K562 (cell line): ENCODE measurements at regions of chr14 and their contacts with region 1.

Region 1: DNA sequence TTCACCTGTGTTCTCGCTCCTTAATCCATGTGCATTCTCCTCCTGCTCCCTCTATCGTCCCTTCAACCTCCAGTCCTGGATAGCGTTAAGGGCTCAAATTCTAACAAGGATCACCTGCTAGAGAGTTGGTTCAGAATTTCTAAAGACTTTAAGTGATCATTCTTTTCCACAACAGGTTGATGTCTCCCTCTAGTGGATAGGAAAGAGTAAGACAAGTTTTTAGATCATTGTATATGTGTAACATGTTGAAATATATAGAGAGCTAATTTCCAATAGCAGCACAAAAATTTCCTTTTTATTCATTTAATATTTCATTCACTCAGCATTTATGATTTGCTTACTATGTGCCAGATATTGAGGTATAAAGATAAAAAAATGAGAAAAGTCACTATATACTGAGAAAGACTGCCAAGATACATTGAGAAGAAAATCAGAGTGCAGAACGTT is 9.3 kb upstream of the ESR2 start:
- DNase-seq: peak; percentile 41 to 48 (median 44)
- ATAC-seq: peak; percentile 89
- H3K4me3 ChIP-seq: no peak overlapping the region
- H3K27ac ChIP-seq: no peak overlapping the region
- H3K4me1 ChIP-seq: no peaks in the 10 kb centered on the region
- H3K27me3 ChIP-seq: peaks cover 0 to 4% of the 10 kb centered on the region in 2 experiments; a peak in 1 of 5 replicates
- CTCF ChIP-seq: peak; percentile 37 to 80 (median 44); a peak in 3 of 6 replicates
- EP300 ChIP-seq: no peak
- POLR2A ChIP-seq: no peak
- RAD21 ChIP-seq: peak; percentile 76 to 88

Region 2: GRCh38 chr14:63388763-63389431 is 914.6 kb before region 1 on chr14:
- CTCF ChIA-PET with region 1: interaction called, 6 read pairs
- POLR2A ChIA-PET with region 1: no interaction called
- in situ Hi-C with region 1: loop called (anchors 25 kb)
- intact Hi-C with region 1: loop called (anchors 5 kb)
- DNase-seq: peak; percentile 23 to 55 (median 36)
- ATAC-seq: peak; percentile 94
- H3K4me3 ChIP-seq: no peak overlapping the region
- H3K27ac ChIP-seq: no peak overlapping the region
- H3K4me1 ChIP-seq: no peaks in the 10 kb centered on the region
- H3K27me3 ChIP-seq: no peaks in the 10 kb centered on the region
- CTCF ChIP-seq: peak; percentile 63 to 79 (median 74)
- EP300 ChIP-seq: no peak
- POLR2A ChIP-seq: no peak
- RAD21 ChIP-seq: peak; percentile 57 to 77

Region 3: DNA sequence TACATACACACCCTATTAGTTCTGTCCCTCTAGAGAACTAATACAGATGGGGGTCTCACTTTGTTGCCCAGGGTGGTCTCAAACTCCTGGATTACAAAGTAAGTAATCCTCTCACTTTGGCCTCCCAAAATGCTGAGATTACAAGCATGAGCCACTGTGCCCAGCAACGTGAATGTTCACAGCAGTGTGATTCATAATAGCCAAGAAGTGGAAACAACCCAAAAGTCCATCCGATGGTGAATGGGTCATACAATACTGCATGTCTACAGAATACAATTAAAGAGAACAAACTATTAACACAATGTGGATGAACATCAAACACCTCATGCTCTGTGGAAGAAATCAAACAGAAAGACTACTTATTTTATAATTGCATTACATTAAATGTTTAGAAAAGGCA is 508.0 kb before region 1 on chr14:
- CTCF ChIA-PET with region 1: interaction called, 4 read pairs
- POLR2A ChIA-PET with region 1: no interaction called
- in situ Hi-C with region 1: loop called (anchors 10 kb)
- intact Hi-C with region 1: no loop called
- DNase-seq: no peak
- ATAC-seq: no peak
- H3K4me3 ChIP-seq: no peak overlapping the region
- H3K27ac ChIP-seq: no peak overlapping the region
- H3K4me1 ChIP-seq: no peaks in the 10 kb centered on the region
- H3K27me3 ChIP-seq: no peaks in the 10 kb centered on the region
- CTCF ChIP-seq: no peak
- EP300 ChIP-seq: no peak
- POLR2A ChIP-seq: no peak
- RAD21 ChIP-seq: no peak

Region 4: DNA sequence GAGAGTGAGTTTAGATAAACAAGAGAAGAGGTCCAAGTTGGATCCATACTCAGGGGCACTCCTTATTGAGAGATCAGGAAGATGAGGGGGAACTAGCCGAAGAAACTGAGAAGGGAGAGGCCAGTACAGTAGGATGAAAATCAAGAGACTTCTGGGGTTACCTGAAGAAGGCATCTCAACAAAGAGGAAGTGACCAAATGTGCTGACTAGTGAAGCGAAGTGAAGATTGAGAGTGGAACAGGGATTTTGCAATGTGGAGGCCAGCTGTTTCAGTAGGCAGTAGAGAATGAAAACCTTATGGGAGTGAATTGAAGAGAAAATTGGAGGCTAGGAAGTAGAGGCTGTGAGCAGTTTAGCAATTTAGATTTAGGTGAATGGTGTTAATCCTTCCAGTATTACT is 297.7 kb before region 1 on chr14:
- CTCF ChIA-PET with region 1: no interaction called
- POLR2A ChIA-PET with region 1: interaction called, 3 read pairs
- in situ Hi-C with region 1: loop called (anchors 25 kb)
- intact Hi-C with region 1: no loop called
- DNase-seq: no peak
- ATAC-seq: no peak
- H3K4me3 ChIP-seq: no peak overlapping the region
- H3K27ac ChIP-seq: no peak overlapping the region
- H3K4me1 ChIP-seq: no peaks in the 10 kb centered on the region
- H3K27me3 ChIP-seq: no peaks in the 10 kb centered on the region; a peak in 1 of 5 replicates
- CTCF ChIP-seq: no peak
- EP300 ChIP-seq: no peak
- POLR2A ChIP-seq: no peak
- RAD21 ChIP-seq: no peak

Region 5: DNA sequence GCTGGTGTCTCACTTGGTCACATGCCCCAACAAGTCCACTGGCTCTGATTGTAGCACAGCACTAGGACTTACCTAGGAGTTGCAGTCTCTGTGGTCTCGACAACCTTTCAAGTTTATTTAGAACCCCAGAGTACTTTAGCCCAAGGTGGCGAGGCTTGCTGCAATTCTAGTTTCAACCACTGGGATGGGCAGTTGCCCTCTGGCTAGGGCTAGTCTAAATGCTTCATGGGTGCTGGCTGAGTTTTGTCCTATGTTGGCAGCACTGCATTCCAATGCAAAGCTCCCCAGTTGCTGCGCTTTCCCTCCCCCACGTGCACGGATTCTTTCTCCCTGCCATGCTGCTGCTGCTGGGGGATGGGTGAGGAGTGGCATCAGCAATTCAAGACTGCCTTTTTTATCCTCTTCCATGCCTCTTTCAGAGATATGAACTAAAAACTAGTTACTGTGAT is 242.8 kb before region 1 on chr14:
- CTCF ChIA-PET with region 1: interaction called, 5 read pairs
- POLR2A ChIA-PET with region 1: no interaction called
- in situ Hi-C with region 1: no loop called
- intact Hi-C with region 1: loop called (anchors 5 kb)
- DNase-seq: peak; percentile 5 to 12 (median 6)
- ATAC-seq: peak; percentile 76
- H3K4me3 ChIP-seq: no peak overlapping the region
- H3K27ac ChIP-seq: no peak overlapping the region
- H3K4me1 ChIP-seq: no peaks in the 10 kb centered on the region
- H3K27me3 ChIP-seq: no peaks in the 10 kb centered on the region
- CTCF ChIP-seq: peak; percentile 35 to 46 (median 42); a peak in 5 of 6 replicates
- EP300 ChIP-seq: no peak
- POLR2A ChIP-seq: no peak
- RAD21 ChIP-seq: peak in 1 of 2 experiments; percentile 46; a peak in 2 of 4 replicates

Region 6: GRCh38 chr14:64137657-64138290 is 165.7 kb before region 1 on chr14:
- CTCF ChIA-PET with region 1: interaction called, 9 read pairs
- POLR2A ChIA-PET with region 1: no interaction called
- in situ Hi-C with region 1: no loop called
- intact Hi-C with region 1: loop called (anchors 2 kb)
- DNase-seq: peak in 2 of 4 experiments; percentile 17 to 43
- ATAC-seq: peak; percentile 80
- H3K4me3 ChIP-seq: no peak overlapping the region
- H3K27ac ChIP-seq: no peak overlapping the region
- H3K4me1 ChIP-seq: no peaks in the 10 kb centered on the region
- H3K27me3 ChIP-seq: peaks cover 2 to 5% of the 10 kb centered on the region in 2 experiments; a peak in 4 of 5 replicates
- CTCF ChIP-seq: peak; percentile 36 to 57 (median 52); a peak in 5 of 6 replicates
- EP300 ChIP-seq: no peak
- POLR2A ChIP-seq: no peak
- RAD21 ChIP-seq: peak; percentile 59 to 68